HEK293 (cell line): ENCODE measurements at regions of chr22 and their contacts with region 1.

Region 1: GRCh38 chr22:22463855-22464540 is 44.5 kb downstream of the ZNF280B start:
- H3K4me3 ChIP-seq: no peak overlapping the region
- H3K27ac ChIP-seq: no peak overlapping the region
- H3K4me1 ChIP-seq: no peaks in the 10 kb centered on the region
- CTCF ChIP-seq: peak; percentile 77

Region 2: DNA sequence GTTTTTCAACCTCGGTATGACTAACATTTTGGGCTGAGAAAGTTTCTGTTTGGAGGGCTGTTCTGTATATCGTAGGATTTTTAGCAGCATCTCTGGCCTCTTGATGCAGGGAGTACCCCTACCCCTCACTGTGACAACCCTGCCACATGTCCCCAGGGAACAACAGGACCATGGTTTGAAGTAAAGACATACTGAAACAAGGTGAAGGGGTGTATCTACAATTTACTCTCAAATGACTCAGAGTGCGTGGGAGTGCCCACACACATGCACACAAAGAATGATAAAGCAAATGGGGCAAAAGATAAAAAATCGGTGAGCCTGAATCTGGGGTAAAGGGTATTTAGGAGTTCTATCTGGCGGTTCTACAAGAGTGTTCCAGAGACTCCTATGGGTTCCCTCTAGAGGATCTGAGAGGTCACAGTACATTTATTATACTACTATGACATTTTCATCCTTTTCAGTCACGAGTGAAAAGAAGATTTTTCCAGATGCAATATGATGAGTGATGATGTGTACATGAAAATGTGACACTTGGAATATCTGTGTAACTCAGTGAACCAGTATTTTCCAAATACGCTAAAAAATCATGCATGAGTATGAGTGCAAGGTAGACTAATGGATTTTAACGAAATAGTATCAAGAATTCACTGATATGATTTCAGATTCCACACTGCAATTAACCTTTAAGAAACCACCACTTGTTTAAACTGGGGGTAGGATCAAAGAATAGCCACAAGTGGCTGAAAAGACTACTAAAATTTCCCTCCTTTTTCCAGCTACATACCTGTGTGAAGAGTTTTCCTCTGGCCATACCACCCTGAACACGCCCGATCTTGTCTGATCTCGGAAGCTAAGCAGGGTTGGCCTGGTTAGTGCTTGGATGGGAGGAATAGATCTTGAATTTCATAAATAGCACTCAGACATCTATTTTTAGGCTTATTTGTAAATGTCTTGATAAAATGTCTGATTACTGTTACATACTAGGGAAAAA is 672.1 kb before region 1 on chr22:
- CTCF ChIA-PET with region 1: no interaction called
- POLR2A ChIA-PET with region 1: no interaction called
- H3K4me3 ChIP-seq: no peak overlapping the region
- H3K27ac ChIP-seq: no peak overlapping the region
- H3K4me1 ChIP-seq: no peaks in the 10 kb centered on the region
- CTCF ChIP-seq: no peak

Region 3: DNA sequence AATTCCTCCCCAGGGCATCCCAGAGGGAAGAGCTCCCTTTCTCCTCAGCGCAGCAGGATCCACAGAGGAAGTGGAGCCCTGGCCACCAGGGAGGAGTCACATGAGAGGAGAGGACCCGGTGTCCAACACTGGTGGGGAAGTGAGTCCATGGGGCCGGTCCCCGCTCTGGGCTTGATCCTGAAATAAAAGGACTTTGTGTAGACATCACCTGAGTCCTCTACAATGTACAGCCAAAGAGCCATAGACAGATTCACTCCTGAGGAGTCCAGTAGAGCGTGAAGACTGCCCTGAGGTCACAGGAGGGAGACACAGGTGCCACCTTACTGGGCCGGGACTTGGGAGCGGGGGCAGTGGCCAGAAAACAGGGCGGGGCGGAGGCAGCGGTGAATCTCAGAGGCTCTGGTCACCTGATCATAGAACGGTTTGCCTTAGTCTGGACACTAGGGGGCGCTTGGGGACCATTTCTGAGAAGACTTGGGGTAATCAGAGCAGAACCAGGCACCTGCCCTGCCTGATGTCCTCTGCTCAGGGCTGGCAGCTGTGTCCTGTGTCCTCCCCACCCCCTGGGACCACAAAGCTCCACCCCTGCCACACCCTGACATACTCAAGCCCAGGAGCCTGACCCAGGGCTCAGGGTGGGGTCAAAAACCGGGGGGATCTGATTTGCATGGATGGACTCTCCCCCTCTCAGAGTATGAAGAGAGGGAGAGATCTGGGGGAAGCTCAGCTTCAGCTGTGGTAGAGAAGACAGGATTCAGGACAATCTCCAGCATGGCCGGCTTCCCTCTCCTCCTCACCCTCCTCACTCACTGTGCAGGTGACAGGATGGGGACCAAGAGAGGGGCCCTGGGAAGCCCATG is 106.7 kb before region 1 on chr22:
- CTCF ChIA-PET with region 1: interaction called, 17 read pairs
- POLR2A ChIA-PET with region 1: no interaction called
- H3K4me3 ChIP-seq: peak overlapping the region; percentile 22
- H3K27ac ChIP-seq: no peak overlapping the region
- H3K4me1 ChIP-seq: no peaks in the 10 kb centered on the region
- CTCF ChIP-seq: peak; percentile 79

Region 4: DNA sequence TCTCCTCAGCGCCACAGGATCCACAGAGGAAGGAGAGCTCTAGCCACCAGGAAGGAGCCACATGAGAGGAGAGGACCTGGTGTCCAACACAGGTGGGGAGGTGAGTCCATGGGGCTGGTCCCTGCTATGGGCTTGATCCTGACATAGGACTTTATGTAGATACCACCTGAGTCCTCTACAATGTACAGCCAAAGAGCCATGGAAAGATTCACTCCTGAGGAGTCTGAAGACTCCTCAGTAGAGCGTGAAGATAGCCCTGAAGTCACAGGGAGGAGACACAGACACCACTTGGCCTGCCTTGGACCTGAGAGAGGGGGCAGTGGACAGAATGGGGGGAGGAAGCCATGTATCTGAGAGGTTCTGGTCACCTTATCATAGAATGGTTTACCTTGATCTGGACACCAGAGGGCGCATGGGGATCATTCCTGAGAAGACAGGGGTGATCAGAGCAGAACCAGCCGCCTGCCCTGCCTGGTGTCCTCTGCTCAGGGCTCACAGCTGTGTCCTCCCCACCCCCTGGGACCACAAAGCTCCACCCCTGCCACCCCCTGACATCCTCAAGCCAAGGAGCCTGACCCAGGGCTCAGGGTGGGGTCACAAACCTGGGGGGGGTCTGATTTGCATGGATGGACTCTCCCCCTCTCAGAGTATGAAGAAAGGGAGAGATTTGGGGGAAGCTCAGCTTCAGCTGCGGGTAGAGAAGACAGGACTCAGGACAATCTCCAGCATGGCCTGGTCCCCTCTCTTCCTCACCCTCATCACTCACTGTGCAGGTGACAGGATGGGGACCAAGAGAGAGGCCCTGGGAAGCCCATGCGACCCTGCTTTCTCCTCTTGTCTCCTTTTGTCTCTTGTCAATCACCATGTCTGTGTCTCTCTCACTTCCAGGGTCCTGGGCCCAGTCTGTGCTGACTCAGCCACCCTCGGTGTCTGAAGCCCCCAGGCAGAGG is 32.5 kb before region 1 on chr22:
- CTCF ChIA-PET with region 1: interaction called, 30 read pairs
- POLR2A ChIA-PET with region 1: no interaction called
- H3K4me3 ChIP-seq: no peak overlapping the region
- H3K27ac ChIP-seq: no peak overlapping the region
- H3K4me1 ChIP-seq: no peaks in the 10 kb centered on the region
- CTCF ChIP-seq: 0 out of 2 replicates have a peak, but pooled peaks have one; percentile 34

Region 5: GRCh38 chr22:22479999-22480532 is 16.1 kb after region 1 on chr22:
- CTCF ChIA-PET with region 1: interaction called, 87 read pairs
- POLR2A ChIA-PET with region 1: no interaction called
- H3K4me3 ChIP-seq: no peak overlapping the region
- H3K27ac ChIP-seq: no peak overlapping the region
- H3K4me1 ChIP-seq: no peaks in the 10 kb centered on the region
- CTCF ChIP-seq: no peak

Region 6: GRCh38 chr22:22587577-22588188 is 123.7 kb after region 1 on chr22:
- CTCF ChIA-PET with region 1: interaction called, 21 read pairs
- POLR2A ChIA-PET with region 1: no interaction called
- H3K4me3 ChIP-seq: no peak overlapping the region
- H3K27ac ChIP-seq: no peak overlapping the region
- H3K4me1 ChIP-seq: no peaks in the 10 kb centered on the region
- CTCF ChIP-seq: no peak